OCI-LY7 (cell line): ENCODE measurements at regions of chr6 and their contacts with region 1.

Region 1: GRCh38 chr6:63663147-63663877 is 27.7 kb downstream of the PHF3 start:
- DNase-seq: no peak
- H3K4me3 ChIP-seq: no peak overlapping the region
- H3K27ac ChIP-seq: peak overlapping the region; percentile 39
- H3K4me1 ChIP-seq: peaks cover 75% of the 10 kb centered on the region
- CTCF ChIP-seq: no peak

Region 2: GRCh38 chr6:63307581-63308246 is 355.6 kb before region 1 on chr6:
- CTCF ChIA-PET with region 1: no interaction called
- POLR2A ChIA-PET with region 1: no interaction called
- intact Hi-C with region 1: no loop called
- DNase-seq: peak; percentile 54
- H3K4me3 ChIP-seq: no peak overlapping the region
- H3K27ac ChIP-seq: no peak overlapping the region
- H3K4me1 ChIP-seq: no peaks in the 10 kb centered on the region
- CTCF ChIP-seq: peak; percentile 80

Region 3: DNA sequence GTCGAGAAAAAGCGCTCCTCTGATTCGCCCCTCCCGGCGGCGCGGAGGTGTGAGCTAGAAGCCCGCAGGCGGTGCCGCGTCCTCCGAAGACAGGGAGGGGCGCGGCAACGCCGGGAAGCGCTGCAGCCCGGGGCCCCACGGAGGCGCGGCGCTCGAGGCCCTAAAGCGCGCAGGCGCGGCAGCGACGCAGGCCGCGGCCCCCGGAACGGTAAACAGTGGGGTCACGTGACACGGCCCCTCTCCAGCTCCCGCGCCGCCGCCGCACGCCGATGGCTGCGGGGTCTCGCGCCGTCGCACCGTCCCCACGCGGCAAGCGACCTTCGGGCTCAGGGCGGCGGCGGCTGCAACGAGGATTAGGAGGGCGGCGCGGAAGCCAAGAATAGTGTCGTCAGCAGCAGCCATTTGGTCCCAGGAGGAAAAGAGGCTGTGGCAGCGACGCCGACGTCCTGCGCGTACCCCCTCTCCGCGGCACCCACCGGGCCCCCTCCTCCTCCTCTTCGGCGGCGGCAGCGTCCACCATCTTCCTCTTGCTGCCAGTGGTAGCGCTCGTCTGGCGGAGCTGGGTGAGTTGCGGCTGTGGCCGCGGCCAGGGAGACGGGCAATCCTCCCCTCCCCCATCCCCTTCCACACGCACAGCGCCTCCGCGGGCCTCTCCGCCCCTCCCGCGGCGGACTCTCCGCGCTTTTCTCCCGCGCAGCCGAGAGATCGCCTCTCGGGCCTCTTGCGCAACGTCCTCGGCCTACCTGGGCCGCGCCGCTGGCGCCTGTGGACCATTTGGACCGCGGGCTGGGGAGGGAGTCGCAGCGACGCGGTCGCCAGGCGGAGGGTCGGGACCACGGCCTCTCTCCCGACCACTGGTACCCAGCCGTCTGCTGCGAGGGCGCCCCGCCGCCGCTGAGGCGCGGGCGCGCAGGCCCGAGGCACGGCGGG is 27.5 kb before region 1 on chr6 and contains the start of gene PHF3:
- CTCF ChIA-PET with region 1: interaction called, 6 read pairs
- POLR2A ChIA-PET with region 1: interaction called, 15 read pairs
- intact Hi-C with region 1: loop called (anchors 2 kb)
- DNase-seq: peak; percentile 96
- H3K4me3 ChIP-seq: peak within 1 kb of the TSS; percentile 78
- H3K27ac ChIP-seq: peak within 1 kb of the TSS; percentile 77
- H3K4me1 ChIP-seq: peaks cover 48% of the 10 kb centered on the region
- CTCF ChIP-seq: peak; percentile 42
- total RNA-seq, gene PHF3: 54.0 and 54.8 TPM in 2 replicates

Region 4: DNA sequence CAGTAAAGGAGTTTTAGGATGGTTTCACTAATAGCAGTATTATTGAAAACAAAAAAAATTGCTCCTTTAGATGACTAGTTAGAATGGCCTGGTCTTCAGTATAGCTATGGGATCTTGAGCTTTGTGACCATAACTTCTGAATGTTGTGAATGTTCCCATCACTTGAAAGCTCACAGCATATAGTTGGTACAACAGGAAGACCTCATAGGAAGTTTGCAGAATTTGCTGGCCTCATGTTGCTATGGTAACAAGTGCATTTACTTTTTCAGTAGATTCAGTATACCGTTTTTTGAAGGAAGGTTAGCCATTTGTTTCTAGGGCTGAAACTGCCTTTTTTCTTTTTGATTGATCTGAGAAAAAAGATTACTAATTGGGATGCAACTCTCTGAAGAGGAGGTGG is 19.4 kb before region 1 on chr6:
- CTCF ChIA-PET with region 1: no interaction called
- POLR2A ChIA-PET with region 1: interaction called, 37 read pairs
- intact Hi-C with region 1: no loop called
- DNase-seq: peak; percentile 58
- H3K4me3 ChIP-seq: no peak overlapping the region
- H3K27ac ChIP-seq: no peak overlapping the region
- H3K4me1 ChIP-seq: peaks cover 38% of the 10 kb centered on the region
- CTCF ChIP-seq: no peak

Region 5: DNA sequence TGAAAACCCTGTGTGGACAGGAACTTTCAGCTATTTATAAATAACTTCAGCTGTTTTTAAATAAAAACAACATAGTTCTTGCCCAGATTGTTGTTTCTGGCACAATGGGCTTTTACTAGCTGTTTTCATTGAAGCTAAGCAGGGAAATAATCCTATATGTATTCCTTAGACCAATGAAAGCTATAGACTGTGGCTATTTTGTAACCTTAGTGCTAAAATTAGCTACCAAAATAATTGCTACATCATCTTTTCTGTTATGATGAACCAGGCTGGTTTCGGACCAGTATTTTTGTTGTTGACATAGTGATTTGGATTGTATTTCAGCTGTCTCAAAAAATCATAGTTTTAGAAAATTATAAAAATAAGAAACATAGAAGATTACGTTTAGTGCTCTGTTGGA is 14.0 kb before region 1 on chr6:
- CTCF ChIA-PET with region 1: no interaction called
- POLR2A ChIA-PET with region 1: interaction called, 37 read pairs
- intact Hi-C with region 1: no loop called
- DNase-seq: no peak
- H3K4me3 ChIP-seq: no peak overlapping the region
- H3K27ac ChIP-seq: no peak overlapping the region
- H3K4me1 ChIP-seq: no peaks in the 10 kb centered on the region
- CTCF ChIP-seq: no peak